Activated CD8-positive, alpha-beta T cell treated with anti-CD3 and anti-CD28 coated beads, Interleukin-2, amount 10 ng/mL, durations not matched to agents 7 days and 5 days (primary cell): ENCODE measurements at regions of chr10 and their contacts with region 1.

Region 1: DNA sequence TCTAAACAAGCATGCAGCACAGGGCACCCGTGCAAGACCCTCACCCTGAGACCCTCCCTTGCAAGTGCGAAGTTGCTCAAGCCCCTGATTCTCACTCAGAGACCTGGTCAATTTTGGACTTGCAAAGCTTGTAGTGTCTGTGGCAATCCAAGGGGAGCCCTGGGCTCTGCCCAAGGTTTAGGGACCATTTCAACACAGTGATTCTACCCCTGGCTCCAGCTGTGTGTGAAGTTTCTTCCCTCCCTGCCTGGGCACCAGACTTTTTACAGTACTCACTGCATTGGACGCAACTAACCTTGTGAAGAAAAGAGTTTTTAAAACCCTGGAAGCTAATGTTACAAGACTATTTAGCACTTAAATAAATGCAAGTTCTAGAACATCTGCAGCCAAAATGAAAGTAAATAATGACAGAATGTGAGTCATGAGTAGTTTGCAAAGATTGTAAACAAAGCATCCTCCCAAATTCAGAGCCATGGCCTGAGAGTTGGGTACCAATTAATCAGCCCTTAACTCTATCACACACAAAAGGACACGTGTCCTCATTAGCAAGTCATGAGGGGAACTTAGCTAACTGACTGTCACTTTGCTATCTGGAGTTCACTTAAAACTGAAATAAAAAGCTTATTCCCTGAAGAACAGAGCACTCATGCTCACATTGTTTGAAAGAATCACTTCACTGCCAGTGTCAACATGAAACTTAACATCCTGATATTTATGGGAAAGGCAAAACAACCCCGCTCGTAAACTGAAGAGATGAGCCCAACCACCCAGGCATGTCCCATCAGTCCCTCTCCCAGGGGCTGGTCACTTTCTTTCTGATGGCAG is 48.1 kb downstream of the RGS10 start:
- DNase-seq: no peak
- ATAC-seq: no peak
- H3K4me3 Mint-ChIP-seq: no peak overlapping the region
- H3K27ac Mint-ChIP-seq: peak overlapping the region; percentile 79
- H3K4me1 Mint-ChIP-seq: peaks cover 83% of the 10 kb centered on the region
- H3K27me3 Mint-ChIP-seq: no peaks in the 10 kb centered on the region

Region 2: DNA sequence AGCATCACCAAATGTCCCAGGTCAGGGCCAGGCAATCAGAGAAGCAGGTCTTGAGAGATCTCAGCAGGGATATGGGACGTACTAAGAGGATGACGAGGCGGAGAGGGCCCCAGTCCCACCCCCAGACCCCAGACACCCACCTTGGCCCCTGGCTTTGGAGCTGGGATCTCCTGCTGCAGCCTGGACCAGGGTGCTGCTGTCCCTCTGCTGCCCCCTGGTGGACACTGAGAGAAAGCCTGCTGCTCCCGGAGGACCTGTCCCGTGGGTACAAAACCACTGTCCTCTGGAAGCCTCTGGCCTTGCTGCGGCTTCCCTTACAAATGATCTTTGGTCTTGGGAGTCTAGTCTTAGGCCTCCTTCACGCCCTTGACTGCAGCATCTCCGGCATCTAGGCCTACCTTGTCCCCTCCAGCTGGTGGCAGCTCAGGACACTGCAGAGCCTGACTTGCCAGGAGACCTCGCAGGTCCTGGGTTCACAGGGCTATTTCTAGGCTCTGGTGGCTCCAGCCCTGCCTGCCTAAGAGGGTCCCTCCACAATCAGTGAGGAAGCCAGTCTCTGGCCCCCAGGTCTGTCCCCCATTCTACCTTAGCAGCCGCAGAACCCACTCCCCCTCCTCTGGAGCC is 49.0 kb before region 1 on chr10:
- CTCF ChIA-PET with region 1: interaction called, 18 read pairs
- POLR2A ChIA-PET with region 1: no interaction called
- DNase-seq: peak; percentile 89
- ATAC-seq: peak; percentile 85
- H3K4me3 Mint-ChIP-seq: no peak overlapping the region
- H3K27ac Mint-ChIP-seq: peak overlapping the region; percentile 77
- H3K4me1 Mint-ChIP-seq: peaks cover 20% of the 10 kb centered on the region
- H3K27me3 Mint-ChIP-seq: no peaks in the 10 kb centered on the region

Region 3: GRCh38 chr10:119478111-119478802 is 16.2 kb before region 1 on chr10:
- CTCF ChIA-PET with region 1: interaction called, 27 read pairs
- POLR2A ChIA-PET with region 1: no interaction called
- DNase-seq: peak; percentile 40
- ATAC-seq: peak; percentile 79
- H3K4me3 Mint-ChIP-seq: peak overlapping the region; percentile 8
- H3K27ac Mint-ChIP-seq: peak overlapping the region; percentile 7
- H3K4me1 Mint-ChIP-seq: peaks cover 27% of the 10 kb centered on the region
- H3K27me3 Mint-ChIP-seq: peaks cover 4% of the 10 kb centered on the region

Region 4: GRCh38 chr10:119517235-119518141 is 23.0 kb after region 1 on chr10:
- CTCF ChIA-PET with region 1: interaction called, 10 read pairs
- POLR2A ChIA-PET with region 1: interaction called, 3 read pairs
- DNase-seq: peak; percentile 73
- ATAC-seq: peak; percentile 62
- H3K4me3 Mint-ChIP-seq: peak overlapping the region; percentile 73
- H3K27ac Mint-ChIP-seq: peak overlapping the region; percentile 92
- H3K4me1 Mint-ChIP-seq: peaks cover 80% of the 10 kb centered on the region
- H3K27me3 Mint-ChIP-seq: no peaks in the 10 kb centered on the region